ENCODE measurements at regions of chr14 and their contacts with region 1.

Region 1: GRCh38 chr14:29548948-29549370 is 378.7 kb downstream of the PRKD1 start:
- DNase-seq: peak; percentile 64
- H3K4me3 Mint-ChIP-seq: no peak overlapping the region
- H3K27ac Mint-ChIP-seq: no peak overlapping the region
- H3K4me1 Mint-ChIP-seq: no peaks in the 10 kb centered on the region
- H3K27me3 Mint-ChIP-seq: peaks cover 22% of the 10 kb centered on the region
- CTCF ChIP-seq: peak; percentile 40

Region 2: GRCh38 chr14:29442696-29443095 is 106.3 kb before region 1 on chr14:
- CTCF ChIA-PET with region 1: no interaction called
- POLR2A ChIA-PET with region 1: no interaction called
- intact Hi-C with region 1: no loop called
- DNase-seq: peak; percentile 13
- H3K4me3 Mint-ChIP-seq: no peak overlapping the region
- H3K27ac Mint-ChIP-seq: no peak overlapping the region
- H3K4me1 Mint-ChIP-seq: peaks cover 5% of the 10 kb centered on the region
- H3K27me3 Mint-ChIP-seq: peaks cover 87% of the 10 kb centered on the region
- CTCF ChIP-seq: no peak

Region 3: GRCh38 chr14:29536886-29537511 is 12.0 kb before region 1 on chr14:
- CTCF ChIA-PET with region 1: interaction called, 14 read pairs
- POLR2A ChIA-PET with region 1: no interaction called
- intact Hi-C with region 1: no loop called
- DNase-seq: peak; percentile 26
- H3K4me3 Mint-ChIP-seq: no peak overlapping the region
- H3K27ac Mint-ChIP-seq: no peak overlapping the region
- H3K4me1 Mint-ChIP-seq: no peaks in the 10 kb centered on the region
- H3K27me3 Mint-ChIP-seq: peaks cover 44% of the 10 kb centered on the region
- CTCF ChIP-seq: peak; percentile 44

Region 4: DNA sequence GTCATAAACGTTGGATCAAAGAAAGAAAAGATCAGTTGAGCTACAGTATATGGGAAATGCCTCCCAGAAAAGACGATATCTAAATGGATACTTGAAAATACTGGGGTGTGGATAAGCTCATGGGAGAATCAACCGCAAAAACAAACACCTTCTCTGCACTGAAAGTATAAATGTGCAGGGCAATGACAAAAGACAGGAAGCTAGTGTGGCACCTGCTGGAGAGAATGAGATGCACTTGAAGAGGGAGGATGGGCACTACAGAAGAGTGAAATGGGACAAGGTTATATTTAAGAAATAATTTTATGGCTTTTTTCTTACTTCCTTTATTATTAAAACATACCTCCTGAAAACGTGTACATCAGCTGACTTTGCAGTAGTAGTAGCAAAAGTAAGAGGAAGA is 225.0 kb after region 1 on chr14:
- CTCF ChIA-PET with region 1: no interaction called
- POLR2A ChIA-PET with region 1: no interaction called
- intact Hi-C with region 1: no loop called
- DNase-seq: no peak
- H3K4me3 Mint-ChIP-seq: no peak overlapping the region
- H3K27ac Mint-ChIP-seq: no peak overlapping the region
- H3K4me1 Mint-ChIP-seq: no peaks in the 10 kb centered on the region
- H3K27me3 Mint-ChIP-seq: no peaks in the 10 kb centered on the region
- CTCF ChIP-seq: no peak

Region 5: DNA sequence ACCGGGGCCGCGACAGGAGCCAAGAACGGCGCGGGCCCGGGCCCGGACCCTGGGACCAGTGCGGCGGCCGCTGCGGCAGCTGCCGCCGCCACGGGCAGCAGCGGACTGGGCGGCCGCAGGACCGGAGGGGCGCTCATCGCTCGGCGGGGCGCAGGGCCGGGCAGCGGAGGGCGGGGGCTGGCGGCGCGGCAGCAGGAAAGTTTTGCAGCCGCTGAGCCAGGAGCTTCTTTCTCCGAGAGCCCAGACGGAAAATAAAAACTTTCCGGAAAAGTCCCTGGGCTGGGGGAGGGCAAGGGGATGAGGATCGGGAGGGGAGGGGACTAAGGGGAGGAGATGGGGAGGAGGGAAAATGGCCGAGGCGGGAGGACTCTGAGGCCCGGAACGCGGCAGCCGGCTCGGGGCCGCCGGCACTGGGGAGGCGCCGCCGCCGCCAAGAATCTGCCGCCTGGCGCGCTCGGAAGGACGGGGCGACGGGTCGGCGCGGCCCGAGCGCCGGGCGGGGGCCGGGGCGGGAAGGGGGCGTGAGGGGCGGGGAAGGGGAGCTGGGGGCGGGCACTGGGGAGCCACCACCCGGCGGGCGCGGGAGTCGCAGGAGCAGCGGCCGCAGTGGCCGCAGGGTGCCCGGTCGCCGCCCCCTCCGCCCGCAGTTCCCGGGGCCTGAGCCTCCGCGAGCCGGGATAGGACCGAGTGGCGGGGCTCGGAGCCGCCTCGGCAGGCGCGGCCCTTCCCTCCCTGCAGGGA is 378.6 kb after region 1 on chr14 and contains the start of gene PRKD1:
- CTCF ChIA-PET with region 1: interaction called, 4 read pairs
- POLR2A ChIA-PET with region 1: no interaction called
- intact Hi-C with region 1: loop called (anchors 5 kb)
- DNase-seq: peak; percentile 50
- H3K4me3 Mint-ChIP-seq: peak within 1 kb of the TSS; percentile 98
- H3K27ac Mint-ChIP-seq: peak within 1 kb of the TSS; percentile 26
- H3K4me1 Mint-ChIP-seq: peaks cover 38% of the 10 kb centered on the region
- H3K27me3 Mint-ChIP-seq: no peaks in the 10 kb centered on the region
- CTCF ChIP-seq: peak; percentile 17
- total RNA-seq, gene PRKD1: 7.9 and 8.8 TPM in 2 replicates

Region 6: GRCh38 chr14:30005114-30005808 is 456.3 kb after region 1 on chr14:
- CTCF ChIA-PET with region 1: interaction called, 52 read pairs
- POLR2A ChIA-PET with region 1: interaction called, 3 read pairs
- intact Hi-C with region 1: loop called (anchors 1 kb)
- DNase-seq: peak; percentile 68
- H3K4me3 Mint-ChIP-seq: no peak overlapping the region
- H3K27ac Mint-ChIP-seq: no peak overlapping the region
- H3K4me1 Mint-ChIP-seq: peaks cover 7% of the 10 kb centered on the region
- H3K27me3 Mint-ChIP-seq: no peaks in the 10 kb centered on the region
- CTCF ChIP-seq: peak; percentile 78

Region 7: GRCh38 chr14:30521899-30522736 is 973.2 kb after region 1 on chr14:
- CTCF ChIA-PET with region 1: no interaction called
- POLR2A ChIA-PET with region 1: no interaction called
- intact Hi-C with region 1: loop called (anchors 5 kb)
- DNase-seq: peak; percentile 61
- H3K4me3 Mint-ChIP-seq: no peak overlapping the region
- H3K27ac Mint-ChIP-seq: no peak overlapping the region
- H3K4me1 Mint-ChIP-seq: no peaks in the 10 kb centered on the region
- H3K27me3 Mint-ChIP-seq: no peaks in the 10 kb centered on the region
- CTCF ChIP-seq: peak; percentile 42